Right ventricle myocardium inferior (tissue), 1 donor: ENCODE measurements at regions of chr14 and their contacts with region 1.

Region 1: DNA sequence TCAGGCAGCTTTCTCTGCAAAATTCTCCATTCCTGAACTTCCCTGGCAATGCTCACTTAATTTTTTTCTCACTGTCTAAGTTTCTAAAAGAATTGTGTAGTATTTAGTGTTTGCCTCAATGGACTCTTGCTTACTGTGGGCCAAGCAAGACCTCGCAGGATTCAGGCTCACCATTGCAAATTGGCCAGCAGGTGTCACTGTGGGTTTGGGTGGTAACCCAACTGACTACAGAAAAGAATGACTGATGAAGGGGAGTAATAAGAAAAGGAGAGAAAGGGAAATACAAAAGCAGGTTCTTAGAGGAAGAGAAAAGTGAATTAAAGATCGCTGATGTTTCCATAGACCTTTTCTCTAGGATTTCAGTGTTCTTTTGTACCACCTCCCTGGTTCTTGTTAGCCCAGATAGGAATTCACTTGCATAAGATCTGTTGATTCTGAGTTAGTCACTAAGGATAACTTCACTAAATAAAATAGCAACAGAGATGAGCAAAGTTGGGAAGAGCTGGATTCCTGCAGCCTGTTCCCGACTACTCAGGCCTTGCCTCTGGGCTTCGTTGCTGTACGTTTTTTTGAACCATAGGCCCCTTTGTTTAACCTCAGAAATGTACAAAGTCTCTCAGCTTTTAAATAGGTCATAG is 386.5 kb upstream of the DDHD1 start:
- DNase-seq: no peak
- ATAC-seq: peak; percentile 85

Region 2: GRCh38 chr14:53432378-53432802 is 107.2 kb before region 1 on chr14:
- intact Hi-C with region 1: loop called (anchors 10 kb)
- DNase-seq: no peak
- ATAC-seq: no peak

Region 3: GRCh38 chr14:54175298-54175942 is 635.8 kb after region 1 on chr14:
- intact Hi-C with region 1: loop called (anchors 2 kb)
- DNase-seq: no peak
- ATAC-seq: peak; percentile 32

Region 4: GRCh38 chr14:54330876-54331275 is 791.3 kb after region 1 on chr14:
- intact Hi-C with region 1: loop called (anchors 5 kb)
- DNase-seq: no peak
- ATAC-seq: no peak

Region 5: DNA sequence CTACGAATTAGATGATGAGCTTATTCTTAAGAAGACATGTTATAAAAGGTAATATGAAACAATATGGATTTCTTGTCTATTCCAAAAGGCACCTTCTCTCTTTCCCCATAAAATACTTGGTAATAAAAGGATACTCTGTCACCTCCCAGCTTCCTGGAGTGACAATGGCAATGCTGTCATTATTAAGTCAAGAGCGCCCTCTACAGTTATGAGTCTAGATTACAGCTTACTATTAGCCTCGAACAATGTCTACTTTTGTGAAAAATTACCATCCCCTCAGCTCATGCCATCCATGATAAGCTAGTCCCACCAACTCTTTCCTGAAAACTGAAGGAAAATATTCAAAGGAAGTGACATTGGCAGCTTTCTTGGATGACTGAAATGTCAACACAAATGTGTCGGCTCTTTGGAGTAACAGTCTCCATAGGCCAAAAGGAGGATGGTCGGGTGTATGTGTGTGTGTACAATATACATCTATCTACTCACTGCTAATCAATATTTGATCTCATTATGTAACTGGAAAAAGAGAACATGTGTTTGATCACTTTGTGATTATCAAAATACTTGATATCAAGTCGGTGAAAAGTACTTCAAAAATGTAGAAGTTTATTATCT is 808.5 kb after region 1 on chr14:
- intact Hi-C with region 1: loop called (anchors 5 kb)
- DNase-seq: no peak
- ATAC-seq: peak; percentile 48